Common myeloid progenitor, CD34-positive (primary cell): ENCODE measurements at regions of chr14 and their contacts with region 1.

Region 1: DNA sequence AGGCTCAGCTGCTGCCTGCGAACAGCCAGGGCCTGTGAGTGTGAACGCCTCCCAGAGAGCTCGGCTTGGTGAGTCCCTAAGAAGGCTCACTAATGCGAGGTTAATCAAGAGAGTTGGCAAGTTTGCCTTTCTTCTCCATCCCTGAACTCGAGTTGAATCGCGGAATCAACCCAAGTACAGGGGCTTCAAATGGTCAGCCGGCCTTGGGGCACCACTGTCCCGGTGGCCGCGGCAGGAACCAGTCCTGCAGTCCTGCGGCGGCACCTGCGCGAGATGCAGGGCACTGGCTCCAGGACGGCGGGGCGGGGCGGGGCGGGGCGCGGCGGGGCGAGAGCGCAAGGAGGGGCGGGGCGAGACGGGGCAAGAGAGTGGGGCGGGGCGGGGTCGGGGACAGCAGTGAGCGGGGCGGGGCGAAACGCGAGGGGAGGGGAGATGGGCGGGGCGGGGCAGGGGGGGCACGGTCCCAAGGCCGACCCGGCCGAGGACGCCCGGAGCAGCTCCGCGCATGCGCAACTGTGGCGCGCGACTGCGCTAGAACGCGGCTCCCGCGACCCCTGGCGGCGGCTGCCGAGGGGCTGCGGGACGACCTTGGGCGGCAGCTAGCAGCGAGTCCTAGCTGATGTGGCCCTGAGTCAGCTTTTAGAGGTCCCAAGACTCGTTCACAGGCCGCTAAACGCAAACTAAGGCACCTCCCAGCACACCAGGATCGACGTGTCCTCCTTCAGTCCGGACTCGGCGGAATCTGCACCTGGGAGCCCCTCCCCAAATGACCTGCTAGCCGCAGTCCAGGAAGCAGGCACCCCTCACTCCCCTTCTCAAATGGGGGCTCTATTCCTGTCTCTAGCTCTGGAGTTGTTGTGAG is 58.0 kb downstream of the TTC7B start:
- DNase-seq: peak; percentile 92 to 96 (median 94)
- H3K4me3 ChIP-seq: peak overlapping the region; percentile 30 to 82 (median 61)
- H3K27ac ChIP-seq: peak overlapping the region; percentile 28 to 68
- H3K4me1 ChIP-seq: peaks cover 5 to 24% (median 24%) of the 10 kb centered on the region in 4 experiments
- H3K27me3 ChIP-seq: no peaks in the 10 kb centered on the region

Region 2: DNA sequence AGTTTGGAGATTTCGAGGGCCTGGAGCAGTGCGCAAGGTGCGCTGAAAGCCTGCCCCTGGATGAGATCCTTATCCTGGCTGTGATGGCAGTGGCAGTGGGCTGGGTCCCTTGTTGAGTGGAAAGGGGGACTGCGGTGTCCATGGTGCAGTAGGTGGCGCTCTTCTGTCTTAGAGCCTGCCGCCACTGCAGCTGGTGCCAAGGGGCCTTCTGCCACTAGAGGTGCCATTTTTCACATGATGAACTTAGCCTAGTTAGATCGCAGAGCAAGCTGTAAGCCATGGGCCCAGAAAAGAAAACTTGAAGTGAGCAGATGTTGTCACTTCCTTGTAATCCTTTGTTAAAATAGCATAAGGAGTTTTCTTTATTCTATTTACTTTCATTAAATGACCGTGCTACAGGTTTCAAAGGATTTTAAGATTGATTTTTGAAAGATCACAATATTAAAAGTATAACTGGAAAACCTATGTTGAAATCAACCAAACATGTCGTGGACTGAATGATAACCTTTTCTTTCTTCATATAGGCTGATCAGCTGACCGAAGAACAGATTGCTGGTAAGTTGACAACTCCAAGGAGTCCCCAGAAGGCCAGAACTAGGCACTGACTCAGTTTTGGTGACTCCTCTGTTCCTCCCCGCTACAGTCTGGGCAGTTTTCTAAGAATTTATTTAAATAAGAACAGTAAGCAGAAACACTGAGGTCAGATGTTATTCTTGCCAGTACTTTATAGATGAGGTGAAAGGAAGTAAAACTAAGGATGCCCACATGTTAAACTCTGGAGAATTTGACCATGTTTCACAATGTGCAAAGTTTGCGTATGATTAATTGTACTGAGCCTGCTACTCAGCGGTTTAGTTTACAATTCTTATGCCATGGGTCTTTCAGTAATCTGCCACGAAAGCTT is 358.5 kb before region 1 on chr14:
- CTCF ChIA-PET with region 1: interaction called, 10 read pairs
- POLR2A ChIA-PET with region 1: no interaction called
- DNase-seq: peak; percentile 94 to 97 (median 95)
- H3K4me3 ChIP-seq: peak overlapping the region in 2 of 7 experiments; percentile 91 to 97
- H3K27ac ChIP-seq: no peak overlapping the region
- H3K4me1 ChIP-seq: peaks cover 18 to 54% (median 45%) of the 10 kb centered on the region in 4 experiments
- H3K27me3 ChIP-seq: no peaks in the 10 kb centered on the region

Region 3: GRCh38 chr14:90773196-90773486 is 14.9 kb after region 1 on chr14:
- CTCF ChIA-PET with region 1: interaction called, 43 read pairs
- POLR2A ChIA-PET with region 1: no interaction called
- DNase-seq: no peak
- H3K4me3 ChIP-seq: no peak overlapping the region
- H3K27ac ChIP-seq: no peak overlapping the region
- H3K4me1 ChIP-seq: no peaks in the 10 kb centered on the region
- H3K27me3 ChIP-seq: no peaks in the 10 kb centered on the region

Region 4: GRCh38 chr14:90805662-90806540 is 47.6 kb after region 1 on chr14:
- CTCF ChIA-PET with region 1: interaction called, 32 read pairs
- POLR2A ChIA-PET with region 1: interaction called, 3 read pairs
- DNase-seq: peak in 1 of 3 donors; percentile 36
- H3K4me3 ChIP-seq: no peak overlapping the region
- H3K27ac ChIP-seq: no peak overlapping the region
- H3K4me1 ChIP-seq: peaks cover 0 to 86% (median 68%) of the 10 kb centered on the region in 4 experiments
- H3K27me3 ChIP-seq: no peaks in the 10 kb centered on the region